ENCODE measurements at regions of chr16 and their contacts with region 1.

Region 1: GRCh38 chr16:58299757-58300349 is 5.0 kb upstream of the PRSS54 start:
- DNase-seq: peak; percentile 38 to 69
- H3K4me3 ChIP-seq: no peak overlapping the region
- H3K27ac ChIP-seq: no peak overlapping the region
- H3K4me1 ChIP-seq: no peaks in the 10 kb centered on the region
- H3K27me3 ChIP-seq: no peaks in the 10 kb centered on the region
- CTCF ChIP-seq: peak; percentile 75 to 93 (median 92)
- EP300 ChIP-seq: no peak
- POLR2A ChIP-seq: no peak
- RAD21 ChIP-seq: peak; percentile 92 to 95

Region 2: DNA sequence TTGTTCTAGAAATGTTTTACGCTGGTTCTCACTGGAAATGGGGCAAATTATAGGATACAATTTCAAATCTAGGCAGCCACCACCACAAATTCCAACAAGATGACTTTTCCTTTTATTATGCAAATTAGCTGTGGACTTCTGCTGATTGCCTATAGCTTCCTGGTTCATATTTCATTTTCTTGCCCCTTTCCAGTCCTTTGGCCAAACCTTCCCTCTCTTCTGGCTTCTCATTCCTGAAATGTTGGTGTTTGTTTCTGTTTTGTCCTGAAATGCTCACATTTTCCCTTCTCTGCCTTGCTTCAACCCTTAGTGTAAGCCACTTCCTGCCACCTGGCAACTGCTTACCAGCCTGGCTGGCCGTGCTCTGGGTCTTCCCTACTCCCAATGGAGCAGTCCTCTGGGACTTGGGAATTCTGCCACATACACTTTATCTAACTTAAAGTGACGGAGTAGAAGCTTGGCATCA is 19.0 kb before region 1 on chr16:
- CTCF ChIA-PET with region 1: interaction called, 24 read pairs
- POLR2A ChIA-PET with region 1: interaction called, 3 read pairs
- DNase-seq: no peak
- H3K4me3 ChIP-seq: no peak overlapping the region
- H3K27ac ChIP-seq: no peak overlapping the region
- H3K4me1 ChIP-seq: peaks cover 2 to 7% (median 5%) of the 10 kb centered on the region in 4 experiments; a peak in 6 of 7 replicates
- H3K27me3 ChIP-seq: no peaks in the 10 kb centered on the region
- CTCF ChIP-seq: no peak
- EP300 ChIP-seq: no peak
- POLR2A ChIP-seq: no peak
- RAD21 ChIP-seq: no peak

Region 3: DNA sequence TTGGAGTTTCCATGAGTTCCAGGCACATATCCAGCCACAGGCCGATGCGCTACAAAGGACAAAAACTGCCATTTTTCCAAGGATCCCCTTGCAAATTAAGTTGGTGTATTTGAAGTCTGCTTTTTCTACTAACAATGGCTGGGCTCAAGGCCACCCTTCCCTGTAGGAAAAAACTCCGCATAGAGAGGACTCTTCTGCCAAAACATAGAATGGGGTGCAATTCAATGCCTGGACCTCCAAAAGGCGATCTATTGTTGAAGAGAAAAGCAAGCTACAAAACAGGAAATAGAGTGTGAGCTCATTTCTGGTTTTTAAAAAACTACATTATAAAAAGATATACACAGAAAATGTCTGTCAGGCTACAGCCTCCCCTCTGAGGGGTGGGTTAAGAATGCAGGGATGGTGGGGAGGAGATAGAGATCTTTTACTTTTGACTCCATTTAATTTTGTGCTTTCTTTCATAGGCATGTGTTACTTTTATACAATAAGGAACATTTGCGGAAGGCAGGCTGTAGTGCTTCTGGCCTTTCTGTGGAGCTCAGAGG is 17.8 kb after region 1 on chr16:
- CTCF ChIA-PET with region 1: interaction called, 22 read pairs
- POLR2A ChIA-PET with region 1: no interaction called
- DNase-seq: no peak
- H3K4me3 ChIP-seq: no peak overlapping the region
- H3K27ac ChIP-seq: no peak overlapping the region
- H3K4me1 ChIP-seq: no peaks in the 10 kb centered on the region; a peak in 1 of 7 replicates
- H3K27me3 ChIP-seq: no peaks in the 10 kb centered on the region
- CTCF ChIP-seq: no peak
- EP300 ChIP-seq: no peak
- POLR2A ChIP-seq: no peak
- RAD21 ChIP-seq: no peak

Region 4: GRCh38 chr16:58329147-58329546 is 29.3 kb after region 1 on chr16:
- CTCF ChIA-PET with region 1: interaction called, 15 read pairs
- POLR2A ChIA-PET with region 1: interaction called, 3 read pairs
- DNase-seq: no peak
- H3K4me3 ChIP-seq: no peak overlapping the region
- H3K27ac ChIP-seq: no peak overlapping the region
- H3K4me1 ChIP-seq: peaks cover 2 to 10% (median 4%) of the 10 kb centered on the region in 4 experiments; a peak in 5 of 7 replicates
- H3K27me3 ChIP-seq: no peaks in the 10 kb centered on the region
- CTCF ChIP-seq: no peak
- EP300 ChIP-seq: no peak
- POLR2A ChIP-seq: no peak
- RAD21 ChIP-seq: no peak

Region 5: DNA sequence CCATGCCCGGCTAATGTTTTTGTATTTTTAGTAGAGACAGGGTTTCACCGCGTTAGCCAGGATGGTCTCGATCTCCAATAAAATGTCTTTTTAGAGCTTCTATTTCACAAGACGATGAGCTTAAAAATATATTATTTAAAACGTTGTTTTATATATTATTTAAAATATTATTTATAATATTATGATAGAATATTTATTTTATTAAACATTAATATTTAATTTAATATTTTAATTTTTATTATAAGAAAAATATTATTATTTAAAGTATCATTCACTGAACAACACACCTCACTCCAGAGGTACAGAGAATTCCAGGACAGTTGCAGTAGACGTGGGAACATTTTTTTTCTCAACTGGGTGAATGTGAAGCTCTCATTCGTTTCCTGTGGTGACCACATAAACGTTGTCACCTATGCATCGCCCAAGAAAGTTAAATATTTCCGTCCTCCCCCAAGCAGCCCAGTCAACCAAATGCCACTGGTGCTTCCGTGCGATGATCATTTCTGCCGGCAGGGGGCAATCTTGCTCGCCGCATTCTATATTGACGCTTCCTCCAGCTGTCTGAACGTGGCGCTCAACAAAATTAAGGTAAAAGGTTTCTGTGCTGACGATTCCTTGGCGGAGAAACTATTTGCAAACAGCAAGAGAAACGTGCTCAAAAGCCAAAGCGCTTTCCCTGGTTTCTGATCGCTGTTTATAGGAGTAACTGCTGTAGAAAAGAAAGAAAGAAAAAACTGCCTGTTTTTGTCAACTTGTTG is 36.7 kb after region 1 on chr16:
- CTCF ChIA-PET with region 1: interaction called, 66 read pairs
- POLR2A ChIA-PET with region 1: interaction called, 3 read pairs
- DNase-seq: peak; percentile 79 to 99
- H3K4me3 ChIP-seq: peak overlapping the region in 1 of 4 experiments; percentile 18; a peak in 1 of 8 replicates
- H3K27ac ChIP-seq: no peak overlapping the region
- H3K4me1 ChIP-seq: peaks cover 0 to 7% (median 5%) of the 10 kb centered on the region in 4 experiments; a peak in 5 of 7 replicates
- H3K27me3 ChIP-seq: no peaks in the 10 kb centered on the region
- CTCF ChIP-seq: peak; percentile 91 to 97 (median 94)
- EP300 ChIP-seq: 0 out of 3 replicates have a peak, but pooled peaks of 1 of the 2 experiments have one; percentile 18
- POLR2A ChIP-seq: no peak
- RAD21 ChIP-seq: peak; percentile 89 to 91

Region 6: GRCh38 chr16:58487566-58488351 is 187.9 kb after region 1 on chr16:
- CTCF ChIA-PET with region 1: interaction called, 94 read pairs
- POLR2A ChIA-PET with region 1: interaction called, 3 read pairs
- DNase-seq: peak; percentile 93 to 96
- H3K4me3 ChIP-seq: peak overlapping the region in 2 of 4 experiments; percentile 7 to 23; a peak in 2 of 8 replicates
- H3K27ac ChIP-seq: no peak overlapping the region
- H3K4me1 ChIP-seq: peaks cover 0 to 4% (median under 1%) of the 10 kb centered on the region in 4 experiments; a peak in 2 of 7 replicates
- H3K27me3 ChIP-seq: no peaks in the 10 kb centered on the region; a peak in 2 of 7 replicates
- CTCF ChIP-seq: peak; percentile 97 to 99 (median 98)
- EP300 ChIP-seq: no peak
- POLR2A ChIP-seq: no peak
- RAD21 ChIP-seq: peak; percentile 97 to 98

Region 7: DNA sequence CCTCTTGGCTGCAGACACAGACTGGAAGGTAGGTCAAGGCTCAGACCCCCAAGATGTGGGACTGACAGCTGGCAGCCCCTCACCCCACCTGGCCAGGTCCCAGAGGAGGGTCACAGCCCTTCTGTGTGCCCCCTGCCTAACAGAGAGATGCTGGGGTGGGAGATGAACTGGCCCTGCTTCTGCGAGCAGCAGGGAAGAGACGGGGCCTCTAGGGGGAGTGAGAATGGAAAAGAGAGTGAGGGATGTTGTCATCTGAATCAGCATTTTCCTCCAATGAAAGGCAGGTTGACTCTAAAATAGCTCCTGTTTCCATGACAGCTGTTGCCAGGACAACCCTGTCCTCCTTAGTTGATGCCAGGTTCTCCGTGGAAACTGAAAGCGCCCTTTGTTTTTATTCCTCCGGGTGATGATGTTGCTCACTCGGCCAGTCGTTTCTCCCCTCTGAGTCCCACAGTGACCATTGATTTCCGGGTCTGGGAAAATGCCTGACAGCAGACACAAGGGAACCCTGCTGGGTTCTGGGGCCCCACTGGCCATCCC is 195.2 kb after region 1 on chr16:
- CTCF ChIA-PET with region 1: interaction called, 15 read pairs
- POLR2A ChIA-PET with region 1: interaction called, 4 read pairs
- DNase-seq: peak in 1 of 2 experiments; percentile 79
- H3K4me3 ChIP-seq: peak overlapping the region in 2 of 4 experiments; percentile 2 to 21; a peak in 1 of 8 replicates
- H3K27ac ChIP-seq: peak overlapping the region; percentile 82
- H3K4me1 ChIP-seq: peaks cover 0 to 22% (median 13%) of the 10 kb centered on the region in 4 experiments; a peak in 6 of 7 replicates
- H3K27me3 ChIP-seq: peaks cover 0 to 3% (median 1%) of the 10 kb centered on the region in 4 experiments; a peak in 3 of 7 replicates
- CTCF ChIP-seq: peak; percentile 51 to 84 (median 51)
- EP300 ChIP-seq: peak in 1 of 2 experiments; percentile 76; a peak in 1 of 3 replicates
- POLR2A ChIP-seq: no peak
- RAD21 ChIP-seq: peak in 1 of 2 experiments; percentile 33; a peak in 2 of 4 replicates

Measured in H1 (cell line).